MCF 10A (cell line): ENCODE measurements at regions of chr14 and their contacts with region 1.

Region 1: GRCh38 chr14:73026845-73027542 is at the start of gene ZFYVE1:
- DNase-seq: peak; percentile 99
- H3K4me3 Mint-ChIP-seq: peak within 1 kb of the TSS; percentile 96
- H3K27ac Mint-ChIP-seq: peak within 1 kb of the TSS; percentile 98
- H3K4me1 Mint-ChIP-seq: peaks cover 19% of the 10 kb centered on the region
- H3K27me3 Mint-ChIP-seq: no peaks in the 10 kb centered on the region
- CTCF ChIP-seq: no peak
- total RNA-seq, gene ZFYVE1: 13.3 and 17.6 TPM in 2 replicates

Region 2: DNA sequence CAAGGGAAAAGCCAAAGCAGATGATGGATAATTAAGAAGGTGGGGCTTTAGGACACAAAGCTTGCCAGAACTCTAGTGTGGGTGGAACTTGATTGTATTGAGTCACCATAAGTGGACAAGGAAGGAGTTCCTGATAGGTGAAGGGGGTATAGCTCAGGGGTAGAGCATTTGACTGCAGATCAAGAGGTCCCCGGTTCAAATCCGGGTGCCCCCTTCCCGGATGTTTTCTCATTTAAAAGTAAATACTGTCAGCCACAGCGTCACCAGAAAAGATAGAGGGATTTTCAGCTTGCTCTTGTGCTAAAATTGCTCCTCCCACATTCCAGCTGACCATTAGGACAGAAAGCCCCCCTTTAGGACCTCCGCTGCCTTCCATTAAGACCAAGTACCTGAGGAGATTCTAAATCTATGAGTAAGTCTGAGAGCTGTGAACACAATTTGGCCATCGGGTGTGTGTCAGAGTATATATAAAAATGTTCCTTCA is 64.1 kb before region 1 on chr14:
- CTCF ChIA-PET with region 1: interaction called, 4 read pairs
- POLR2A ChIA-PET with region 1: interaction called, 16 read pairs
- intact Hi-C with region 1: no loop called
- DNase-seq: peak; percentile 89
- H3K4me3 Mint-ChIP-seq: peak overlapping the region; percentile 17
- H3K27ac Mint-ChIP-seq: peak overlapping the region; percentile 88
- H3K4me1 Mint-ChIP-seq: peaks cover 34% of the 10 kb centered on the region
- H3K27me3 Mint-ChIP-seq: no peaks in the 10 kb centered on the region
- CTCF ChIP-seq: no peak